Activated CD4-positive, alpha-beta T cell treated with anti-CD3 and anti-CD28 coated beads for 36 hours (primary cell): ENCODE measurements at regions of chr1 and their contacts with region 1.

Region 1: GRCh38 chr1:205485338-205486228 is 18.9 kb upstream of the CDK18 start:
- DNase-seq: peak; percentile 78
- ATAC-seq: peak; percentile 69
- H3K4me3 Mint-ChIP-seq: no peak overlapping the region
- H3K27ac Mint-ChIP-seq: no peak overlapping the region
- H3K4me1 Mint-ChIP-seq: peaks cover 10% of the 10 kb centered on the region
- H3K27me3 Mint-ChIP-seq: peaks cover 40% of the 10 kb centered on the region

Region 2: GRCh38 chr1:203492082-203492747 is 1993.4 kb before region 1 on chr1:
- CTCF ChIA-PET with region 1: no interaction called
- POLR2A ChIA-PET with region 1: no interaction called
- intact Hi-C with region 1: no loop called
- DNase-seq: no peak
- ATAC-seq: no peak
- H3K4me3 Mint-ChIP-seq: no peak overlapping the region
- H3K27ac Mint-ChIP-seq: no peak overlapping the region
- H3K4me1 Mint-ChIP-seq: peaks cover 7% of the 10 kb centered on the region
- H3K27me3 Mint-ChIP-seq: no peaks in the 10 kb centered on the region

Region 3: DNA sequence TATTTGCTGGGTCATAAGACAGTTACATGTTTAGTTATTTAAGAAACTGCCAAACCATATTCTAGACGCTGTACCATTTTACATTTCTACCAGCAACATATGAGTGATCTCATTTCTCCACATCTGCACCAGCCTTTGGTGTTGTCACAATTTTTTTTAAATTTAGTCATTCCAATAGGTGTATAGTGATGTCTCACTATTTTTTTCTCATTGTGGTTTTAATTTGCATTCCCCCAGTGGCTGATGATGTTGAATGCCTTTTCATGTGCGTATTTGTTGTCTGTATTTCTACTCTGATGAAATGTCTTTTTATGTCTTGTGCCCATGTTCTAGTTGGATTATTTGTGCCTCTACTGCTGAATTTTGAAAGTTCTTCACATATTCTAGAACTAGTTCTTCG is 576.5 kb before region 1 on chr1:
- CTCF ChIA-PET with region 1: no interaction called
- POLR2A ChIA-PET with region 1: no interaction called
- intact Hi-C with region 1: no loop called
- DNase-seq: no peak
- ATAC-seq: peak; percentile 66
- H3K4me3 Mint-ChIP-seq: no peak overlapping the region
- H3K27ac Mint-ChIP-seq: no peak overlapping the region
- H3K4me1 Mint-ChIP-seq: peaks cover 2% of the 10 kb centered on the region
- H3K27me3 Mint-ChIP-seq: peaks cover 19% of the 10 kb centered on the region

Region 4: DNA sequence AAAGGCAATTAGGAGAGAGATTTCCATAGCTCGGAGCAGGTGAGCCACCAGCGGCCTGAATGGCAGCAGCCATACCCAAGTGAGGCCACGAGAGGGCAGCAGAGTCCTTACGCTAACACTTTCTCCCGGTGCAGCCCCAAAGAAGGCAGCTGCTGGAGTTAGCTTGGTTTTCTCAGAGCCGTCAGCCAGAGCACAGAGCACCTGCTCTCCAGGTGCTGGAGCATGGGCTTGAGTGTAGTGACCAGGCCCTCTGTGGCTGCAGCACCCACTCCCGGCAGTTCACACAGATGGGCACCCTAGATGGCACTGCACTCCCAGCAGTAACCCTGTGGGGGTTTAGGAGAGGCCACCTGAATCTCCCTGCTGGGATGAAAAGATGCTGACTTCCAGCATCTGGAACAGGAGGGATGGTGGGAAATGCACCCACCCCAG is 212.0 kb before region 1 on chr1:
- CTCF ChIA-PET with region 1: interaction called, 10 read pairs
- POLR2A ChIA-PET with region 1: no interaction called
- intact Hi-C with region 1: loop called (anchors 5 kb)
- DNase-seq: peak; percentile 92
- ATAC-seq: peak; percentile 90
- H3K4me3 Mint-ChIP-seq: no peak overlapping the region
- H3K27ac Mint-ChIP-seq: no peak overlapping the region
- H3K4me1 Mint-ChIP-seq: peaks cover 35% of the 10 kb centered on the region
- H3K27me3 Mint-ChIP-seq: no peaks in the 10 kb centered on the region

Region 5: GRCh38 chr1:205354259-205354904 is 131.2 kb before region 1 on chr1:
- CTCF ChIA-PET with region 1: interaction called, 82 read pairs
- POLR2A ChIA-PET with region 1: no interaction called
- intact Hi-C with region 1: loop called (anchors 1 kb)
- DNase-seq: peak; percentile 76
- ATAC-seq: peak; percentile 88
- H3K4me3 Mint-ChIP-seq: no peak overlapping the region
- H3K27ac Mint-ChIP-seq: no peak overlapping the region
- H3K4me1 Mint-ChIP-seq: no peaks in the 10 kb centered on the region
- H3K27me3 Mint-ChIP-seq: peaks cover 10% of the 10 kb centered on the region

Region 6: DNA sequence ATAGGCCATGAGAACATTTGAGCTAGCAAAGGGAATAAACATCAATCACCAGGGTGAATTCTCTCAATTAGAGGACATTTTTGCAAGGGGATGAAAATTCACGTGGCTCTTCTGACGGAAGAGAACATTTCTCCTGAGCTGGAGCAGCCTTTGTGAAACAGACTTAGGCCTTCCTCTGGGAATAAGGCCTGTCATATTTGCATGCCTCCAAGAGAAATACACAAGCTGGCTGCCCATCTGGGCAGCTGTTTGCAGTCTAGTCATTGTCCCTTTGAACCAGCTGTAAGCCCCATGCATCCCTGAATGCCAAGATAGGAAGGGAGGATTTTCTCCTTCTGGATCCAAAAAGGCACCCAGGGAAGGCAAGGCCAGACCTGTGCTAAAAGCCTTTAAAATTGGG is 69.3 kb before region 1 on chr1:
- CTCF ChIA-PET with region 1: interaction called, 10 read pairs
- POLR2A ChIA-PET with region 1: no interaction called
- intact Hi-C with region 1: no loop called
- DNase-seq: no peak
- ATAC-seq: no peak
- H3K4me3 Mint-ChIP-seq: no peak overlapping the region
- H3K27ac Mint-ChIP-seq: no peak overlapping the region
- H3K4me1 Mint-ChIP-seq: no peaks in the 10 kb centered on the region
- H3K27me3 Mint-ChIP-seq: peaks cover 14% of the 10 kb centered on the region

Region 7: GRCh38 chr1:205458777-205459566 is 26.6 kb before region 1 on chr1:
- CTCF ChIA-PET with region 1: interaction called, 13 read pairs
- POLR2A ChIA-PET with region 1: no interaction called
- intact Hi-C with region 1: no loop called
- DNase-seq: peak; percentile 66
- ATAC-seq: peak; percentile 68
- H3K4me3 Mint-ChIP-seq: no peak overlapping the region
- H3K27ac Mint-ChIP-seq: no peak overlapping the region
- H3K4me1 Mint-ChIP-seq: peaks cover 9% of the 10 kb centered on the region
- H3K27me3 Mint-ChIP-seq: peaks cover 48% of the 10 kb centered on the region

Region 8: DNA sequence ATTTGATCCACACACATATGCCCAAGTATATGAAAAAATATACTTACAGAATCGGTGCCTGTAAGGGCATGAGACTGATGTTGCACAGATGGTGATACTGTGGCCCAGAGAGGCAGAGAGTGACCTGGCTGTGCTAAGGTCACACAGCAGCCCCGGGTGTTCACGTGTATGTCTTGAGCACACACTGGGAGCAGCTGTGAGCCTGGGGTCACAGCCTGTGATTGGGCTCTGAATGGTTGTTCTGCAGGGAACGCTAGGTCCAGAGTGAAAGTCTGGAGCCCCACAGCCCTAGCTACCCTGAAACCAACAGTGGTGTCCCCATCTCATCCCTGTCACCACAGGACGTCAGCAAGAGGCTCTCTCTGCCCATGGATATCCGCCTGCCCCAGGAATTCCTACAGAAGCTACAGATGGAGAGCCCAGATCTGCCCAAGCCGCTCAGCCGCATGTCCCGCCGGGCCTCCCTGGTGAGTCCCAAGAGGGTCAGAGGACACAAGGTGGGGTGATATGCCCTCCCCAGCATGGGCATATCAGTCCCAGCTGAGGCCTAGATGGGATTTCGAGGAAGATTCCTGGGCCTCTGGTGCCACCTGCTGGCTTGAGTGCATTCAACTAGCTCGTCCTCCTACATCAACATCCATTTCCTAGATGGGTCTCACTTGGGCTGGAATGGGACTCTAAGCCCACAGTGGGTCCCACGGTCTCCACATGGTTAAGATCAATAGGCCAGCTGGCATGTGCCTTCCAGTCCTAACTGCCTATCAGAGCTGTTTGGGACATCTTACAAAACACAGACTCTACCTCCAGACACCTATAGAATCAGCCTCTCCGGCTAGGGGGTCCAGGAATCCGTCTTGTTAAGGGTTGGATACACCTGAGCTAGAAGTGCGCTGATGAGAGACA is 38.6 kb after region 1 on chr1:
- CTCF ChIA-PET with region 1: interaction called, 191 read pairs
- POLR2A ChIA-PET with region 1: no interaction called
- intact Hi-C with region 1: loop called (anchors 1 kb)
- DNase-seq: peak; percentile 87
- ATAC-seq: peak; percentile 45
- H3K4me3 Mint-ChIP-seq: no peak overlapping the region
- H3K27ac Mint-ChIP-seq: no peak overlapping the region
- H3K4me1 Mint-ChIP-seq: no peaks in the 10 kb centered on the region
- H3K27me3 Mint-ChIP-seq: no peaks in the 10 kb centered on the region